IMR-90 (cell line): ENCODE measurements at regions of chr2 and their contacts with region 1.

Region 1: GRCh38 chr2:157497638-157498314 is 53.9 kb upstream of the CYTIP start:
- DNase-seq: peak; percentile 49
- ATAC-seq: peak; percentile 90
- H3K4me3 ChIP-seq: no peak overlapping the region
- H3K27ac ChIP-seq: no peak overlapping the region
- H3K4me1 ChIP-seq: no peaks in the 10 kb centered on the region
- H3K27me3 ChIP-seq: no peaks in the 10 kb centered on the region; the same call in 1 of the 2 replicates
- CTCF ChIP-seq: peak; percentile 81
- POLR2A ChIP-seq: no peak
- RAD21 ChIP-seq: peak; percentile 75

Region 2: GRCh38 chr2:157592948-157593347 is 95.2 kb after region 1 on chr2:
- CTCF ChIA-PET with region 1: no interaction called
- POLR2A ChIA-PET with region 1: no interaction called
- dilution Hi-C with region 1: no loop called
- in situ Hi-C with region 1: no loop called
- intact Hi-C with region 1: loop called (anchors 1 kb)
- DNase-seq: peak; percentile 8
- ATAC-seq: peak; percentile 42; the same call in 1 of the 2 replicates
- H3K4me3 ChIP-seq: no peak overlapping the region
- H3K27ac ChIP-seq: no peak overlapping the region
- H3K4me1 ChIP-seq: no peaks in the 10 kb centered on the region
- H3K27me3 ChIP-seq: peaks cover 7% of the 10 kb centered on the region
- CTCF ChIP-seq: peak; percentile 25; the same call in 1 of the 2 replicates
- POLR2A ChIP-seq: no peak
- RAD21 ChIP-seq: no peak

Region 3: GRCh38 chr2:157777427-157777826 is 279.7 kb after region 1 on chr2:
- CTCF ChIA-PET with region 1: no interaction called
- POLR2A ChIA-PET with region 1: no interaction called
- dilution Hi-C with region 1: no loop called
- in situ Hi-C with region 1: loop called (anchors 25 kb)
- intact Hi-C with region 1: loop called (anchors 1 kb)
- DNase-seq: peak; percentile 69
- ATAC-seq: peak; percentile 57; the same call in 1 of the 2 replicates
- H3K4me3 ChIP-seq: no peak overlapping the region
- H3K27ac ChIP-seq: no peak overlapping the region
- H3K4me1 ChIP-seq: no peaks in the 10 kb centered on the region
- H3K27me3 ChIP-seq: no peaks in the 10 kb centered on the region
- CTCF ChIP-seq: peak; percentile 79
- POLR2A ChIP-seq: no peak
- RAD21 ChIP-seq: peak; percentile 86

Region 4: DNA sequence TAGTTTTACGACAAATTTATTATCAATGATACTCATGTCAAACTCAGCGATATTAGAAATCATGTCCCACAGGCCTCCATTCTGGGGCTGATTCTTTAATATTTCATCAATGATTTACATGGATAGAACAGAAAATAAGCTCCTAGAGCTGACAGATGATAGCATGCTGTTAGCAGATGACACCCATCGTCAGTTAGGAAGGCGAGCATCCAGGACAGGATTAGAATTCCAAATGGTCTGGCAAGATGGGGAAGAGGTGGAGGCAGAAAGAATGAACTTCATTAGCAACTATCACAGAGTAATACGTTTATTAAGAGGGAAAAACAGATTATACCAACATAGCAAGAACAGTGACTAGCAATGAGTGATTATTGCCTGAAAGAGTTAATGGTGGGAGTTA is 424.6 kb after region 1 on chr2:
- CTCF ChIA-PET with region 1: no interaction called
- POLR2A ChIA-PET with region 1: no interaction called
- dilution Hi-C with region 1: no loop called
- in situ Hi-C with region 1: no loop called
- intact Hi-C with region 1: no loop called
- DNase-seq: no peak
- ATAC-seq: no peak
- H3K4me3 ChIP-seq: no peak overlapping the region
- H3K27ac ChIP-seq: no peak overlapping the region
- H3K4me1 ChIP-seq: no peaks in the 10 kb centered on the region
- H3K27me3 ChIP-seq: peaks cover 3% of the 10 kb centered on the region
- CTCF ChIP-seq: no peak
- POLR2A ChIP-seq: no peak
- RAD21 ChIP-seq: no peak